Activated CD8-positive, alpha-beta T cell treated with anti-CD3 and anti-CD28 coated beads, Interleukin-2, amount 10 ng/mL, durations not matched to agents 7 days and 5 days (primary cell): ENCODE measurements at regions of chr5 and their contacts with region 1.

Region 1: GRCh38 chr5:134555890-134556311 is 30.4 kb downstream of the JADE2 start:
- DNase-seq: peak; percentile 83
- ATAC-seq: peak; percentile 88
- H3K4me3 Mint-ChIP-seq: peak overlapping the region; percentile 17
- H3K27ac Mint-ChIP-seq: peak overlapping the region; percentile 89
- H3K4me1 Mint-ChIP-seq: peaks cover 28% of the 10 kb centered on the region
- H3K27me3 Mint-ChIP-seq: no peaks in the 10 kb centered on the region

Region 2: DNA sequence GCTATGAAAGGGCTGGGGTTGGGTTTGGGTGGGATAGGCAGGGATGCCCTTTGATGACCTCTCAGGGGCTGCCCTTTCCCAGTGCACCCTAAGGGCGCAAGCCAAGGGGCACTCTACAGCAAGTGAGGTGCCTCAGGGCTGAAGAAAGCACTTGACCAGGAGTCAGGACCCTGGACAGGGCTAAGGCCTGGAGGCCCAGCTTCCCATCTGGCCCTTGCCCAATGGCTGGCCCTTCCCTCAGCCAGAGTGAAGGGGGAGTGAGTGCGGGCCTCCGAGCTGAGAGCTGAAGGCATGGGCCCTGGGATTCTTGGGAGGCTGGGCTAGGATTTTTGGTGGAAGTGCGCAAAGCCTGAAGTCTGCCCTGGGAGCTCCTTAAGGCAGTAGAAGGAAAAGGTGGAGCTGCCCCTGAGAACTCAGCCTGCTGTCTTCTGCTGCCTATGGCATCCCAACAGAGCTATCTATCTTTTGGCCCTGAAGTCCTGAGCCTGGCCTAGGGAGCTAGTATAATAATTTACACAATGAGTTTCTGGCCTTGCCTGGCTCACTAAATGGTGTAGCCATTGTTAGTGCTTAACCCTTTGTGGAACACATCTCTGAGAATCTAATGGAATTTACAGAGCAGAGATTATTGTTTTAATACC is 14.0 kb before region 1 on chr5:
- CTCF ChIA-PET with region 1: interaction called, 11 read pairs
- POLR2A ChIA-PET with region 1: interaction called, 6 read pairs
- DNase-seq: no peak
- ATAC-seq: no peak
- H3K4me3 Mint-ChIP-seq: no peak overlapping the region
- H3K27ac Mint-ChIP-seq: no peak overlapping the region
- H3K4me1 Mint-ChIP-seq: peaks cover 45% of the 10 kb centered on the region
- H3K27me3 Mint-ChIP-seq: no peaks in the 10 kb centered on the region